Activated naive CD4-positive, alpha-beta T cell treated with anti-CD3 and anti-CD28 coated beads, Interleukin-2, amount 10 ng/mL, durations not matched to agents 7 days and 5 days (primary cell): ENCODE measurements at regions of chr11 and their contacts with region 1.

Region 1: DNA sequence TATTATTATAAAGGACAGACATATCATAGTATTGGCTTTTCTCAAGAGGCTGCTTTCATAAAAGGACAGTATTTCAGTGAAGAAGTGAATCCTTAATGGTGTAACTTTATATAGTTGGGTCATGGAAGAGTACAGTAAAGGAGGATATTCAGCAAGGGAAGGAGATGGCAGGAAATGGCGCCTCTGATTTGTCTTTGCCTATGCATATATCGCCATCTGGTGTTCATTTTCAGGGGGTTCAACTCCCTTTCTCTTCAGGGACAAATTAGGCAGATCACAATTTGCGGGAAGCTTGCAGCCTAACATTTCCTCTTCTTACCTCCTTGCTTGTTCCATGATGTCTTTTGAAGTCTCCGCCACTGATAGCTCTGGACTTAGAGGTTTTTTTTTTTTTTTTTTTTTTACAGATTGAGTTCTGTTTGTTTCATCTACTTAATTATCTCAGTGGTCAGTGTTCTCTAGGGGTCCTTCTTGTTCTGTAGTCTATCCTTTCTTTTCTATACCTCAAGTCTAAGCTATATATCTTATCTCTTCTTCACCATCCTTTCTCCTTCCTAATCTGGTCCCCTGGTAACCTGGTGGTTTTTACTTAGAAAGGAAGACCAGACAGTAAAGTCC is 21.8 kb upstream of the RRM1 start:
- DNase-seq: peak; percentile 60
- H3K4me3 Mint-ChIP-seq: no peak overlapping the region
- H3K27ac Mint-ChIP-seq: peak overlapping the region; percentile 0
- H3K4me1 Mint-ChIP-seq: peaks cover 35% of the 10 kb centered on the region
- H3K27me3 Mint-ChIP-seq: no peaks in the 10 kb centered on the region

Region 2: DNA sequence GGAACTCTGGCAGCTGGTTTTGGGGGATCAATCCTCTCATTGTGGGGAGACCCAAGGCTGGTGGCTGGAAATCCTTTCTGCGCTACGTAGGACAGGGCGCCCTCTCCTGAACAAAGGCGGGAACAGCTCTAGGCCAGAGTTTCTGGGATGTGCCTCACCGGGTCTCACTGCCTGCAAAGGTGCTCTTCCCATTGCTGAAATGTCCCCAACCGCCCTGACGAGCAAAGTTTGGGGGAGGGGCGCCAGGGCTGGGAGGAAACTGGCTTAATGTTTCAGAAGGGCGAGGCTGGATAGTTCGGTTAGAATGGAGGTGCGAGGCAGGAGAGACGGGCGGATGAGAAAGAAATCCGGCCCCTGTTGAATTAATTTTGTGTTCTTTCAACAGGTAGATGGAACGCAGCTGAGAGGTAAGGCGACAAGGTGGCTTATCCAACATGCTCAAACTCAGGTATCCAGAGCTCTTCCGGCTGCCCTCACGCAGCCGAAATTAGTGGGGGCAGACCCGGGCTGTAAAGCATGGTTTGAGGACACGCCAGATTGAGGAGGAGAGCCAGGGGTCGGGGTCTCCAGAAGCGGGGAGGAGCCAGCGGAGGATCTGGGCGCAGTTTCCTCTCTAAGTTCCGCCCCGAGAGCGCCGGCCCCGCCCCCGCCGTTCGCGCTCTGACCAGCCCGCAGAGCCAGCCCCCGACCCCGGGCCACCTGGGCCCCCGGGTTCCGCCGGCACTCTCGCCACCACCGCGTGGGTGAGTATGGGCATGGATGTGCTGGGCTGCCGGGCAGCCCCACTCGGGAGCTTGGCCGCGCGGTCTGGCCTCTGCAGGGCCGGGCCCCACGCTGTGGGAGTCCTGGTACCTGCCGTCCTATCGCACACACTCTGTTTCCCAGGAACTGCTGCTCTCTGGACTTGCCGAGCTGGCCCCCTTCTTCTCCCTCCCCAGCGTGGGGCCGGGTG is 264.6 kb before region 1 on chr11 and contains the start of gene PGAP2:
- CTCF ChIA-PET with region 1: interaction called, 27 read pairs
- DNase-seq: peak; percentile 81
- H3K4me3 Mint-ChIP-seq: peak within 1 kb of the TSS; percentile 93
- H3K27ac Mint-ChIP-seq: peak within 1 kb of the TSS; percentile 91
- H3K4me1 Mint-ChIP-seq: peaks cover 26% of the 10 kb centered on the region
- H3K27me3 Mint-ChIP-seq: no peaks in the 10 kb centered on the region

Region 3: GRCh38 chr11:3841426-3842350 is 231.1 kb before region 1 on chr11:
- CTCF ChIA-PET with region 1: interaction called, 195 read pairs
- DNase-seq: peak; percentile 95
- H3K4me3 Mint-ChIP-seq: peak overlapping the region; percentile 82
- H3K27ac Mint-ChIP-seq: peak overlapping the region; percentile 99
- H3K4me1 Mint-ChIP-seq: peaks cover 56% of the 10 kb centered on the region
- H3K27me3 Mint-ChIP-seq: no peaks in the 10 kb centered on the region

Region 4: DNA sequence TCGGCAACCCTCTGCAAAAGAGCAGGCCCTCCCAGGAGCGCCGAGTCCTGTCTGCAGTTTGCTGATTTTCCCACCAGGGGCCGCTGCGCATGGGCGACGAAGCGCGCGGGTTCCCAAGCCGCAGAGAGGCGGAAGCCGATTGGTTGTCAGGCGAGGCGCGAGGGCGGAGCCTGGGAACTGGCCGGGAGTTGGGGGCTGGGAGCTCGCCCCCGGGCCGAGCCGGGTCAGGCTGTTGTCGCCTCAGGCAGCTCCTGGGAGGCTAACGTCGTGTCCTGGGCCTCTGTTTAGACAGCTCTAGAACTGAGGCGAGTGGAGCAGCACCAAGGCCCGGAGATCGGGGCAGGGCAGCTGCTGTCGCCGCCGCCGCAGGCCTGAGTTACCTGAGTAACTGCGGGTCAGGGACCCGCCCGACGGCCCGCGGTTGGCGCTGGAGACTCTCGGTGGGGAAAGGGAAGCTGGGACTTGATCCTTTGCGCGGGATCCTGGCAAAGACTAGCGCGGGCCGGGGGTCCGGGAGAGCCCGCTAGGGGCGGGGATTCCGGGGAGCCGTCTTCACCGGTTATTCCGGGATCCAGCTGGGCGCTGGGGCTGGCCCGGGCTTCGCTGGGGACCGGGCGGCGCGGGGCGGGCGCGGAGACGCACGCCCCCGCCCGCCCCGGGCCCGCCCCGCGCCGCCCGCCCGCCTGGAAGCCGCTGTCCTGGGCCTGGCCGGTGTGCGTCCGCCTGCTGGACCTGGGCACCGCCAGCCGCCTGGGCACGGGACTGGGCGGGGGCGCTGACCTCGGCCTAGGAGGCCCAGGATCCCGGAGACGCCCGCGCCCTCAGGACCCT is 217.6 kb before region 1 on chr11 and contains the start of gene STIM1:
- CTCF ChIA-PET with region 1: interaction called, 195 read pairs
- DNase-seq: peak; percentile 97
- H3K4me3 Mint-ChIP-seq: peak within 1 kb of the TSS; percentile 98
- H3K27ac Mint-ChIP-seq: peak within 1 kb of the TSS; percentile 98
- H3K4me1 Mint-ChIP-seq: peaks cover 60% of the 10 kb centered on the region
- H3K27me3 Mint-ChIP-seq: peaks cover 6% of the 10 kb centered on the region

Region 5: DNA sequence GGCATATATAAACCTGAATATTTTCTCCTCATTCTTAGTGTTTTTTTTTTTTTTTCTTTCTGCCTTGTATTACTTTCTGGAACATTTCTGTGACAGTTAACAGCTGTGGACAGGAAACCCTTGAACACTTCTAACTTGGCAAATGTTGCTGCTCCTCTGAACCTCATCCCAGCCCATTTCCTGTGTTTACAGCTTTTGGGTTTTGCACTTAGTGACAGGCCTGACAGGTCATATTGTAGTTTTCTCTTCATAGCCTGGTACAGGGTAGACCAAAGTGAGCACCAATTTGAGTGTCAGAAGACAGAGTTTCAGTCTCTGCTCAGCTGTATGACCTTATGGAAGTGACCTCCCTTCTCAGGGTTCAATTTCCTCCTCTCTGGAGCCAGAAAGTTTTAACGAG is 125.7 kb before region 1 on chr11:
- CTCF ChIA-PET with region 1: interaction called, 34 read pairs
- DNase-seq: peak; percentile 72
- H3K4me3 Mint-ChIP-seq: peak overlapping the region; percentile 72
- H3K27ac Mint-ChIP-seq: peak overlapping the region; percentile 98
- H3K4me1 Mint-ChIP-seq: peaks cover 95% of the 10 kb centered on the region
- H3K27me3 Mint-ChIP-seq: no peaks in the 10 kb centered on the region

Region 6: DNA sequence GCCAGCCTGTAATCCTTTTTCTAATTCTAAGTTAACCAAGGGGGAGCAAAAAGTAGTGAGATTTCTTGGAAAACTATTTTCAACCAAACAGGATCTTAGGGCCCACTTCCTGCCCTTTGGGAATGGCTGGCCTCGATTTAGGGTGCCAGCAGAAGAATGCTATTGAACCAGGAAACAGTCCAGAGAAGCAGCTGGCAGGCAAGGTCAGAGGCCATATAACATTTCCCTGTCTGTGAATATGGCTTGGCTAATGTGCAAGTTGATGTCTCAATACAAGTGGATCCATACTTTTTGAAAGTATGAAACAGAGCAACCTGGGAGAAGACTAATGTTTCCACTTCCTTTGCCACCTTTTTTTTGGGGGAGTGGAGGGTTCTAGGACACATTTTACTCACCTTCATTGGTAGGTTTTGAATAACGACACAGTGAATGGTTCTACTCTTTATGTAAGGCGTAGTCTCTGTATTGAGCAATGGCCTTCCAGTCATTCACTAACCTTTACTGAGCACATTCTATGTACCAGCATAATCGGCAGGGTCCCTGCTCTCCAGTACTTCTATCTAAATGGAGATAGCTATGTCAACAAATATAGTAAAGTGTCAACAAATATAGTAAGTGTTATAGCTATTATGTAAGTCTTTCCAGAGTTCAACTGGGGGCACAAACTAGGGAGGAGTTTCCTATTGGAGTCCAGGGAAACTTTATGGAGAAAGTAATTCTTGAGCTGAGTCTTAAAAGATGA is 12.4 kb before region 1 on chr11:
- CTCF ChIA-PET with region 1: interaction called, 27 read pairs
- DNase-seq: no peak
- H3K4me3 Mint-ChIP-seq: no peak overlapping the region
- H3K27ac Mint-ChIP-seq: no peak overlapping the region
- H3K4me1 Mint-ChIP-seq: peaks cover 27% of the 10 kb centered on the region
- H3K27me3 Mint-ChIP-seq: no peaks in the 10 kb centered on the region

Region 7: DNA sequence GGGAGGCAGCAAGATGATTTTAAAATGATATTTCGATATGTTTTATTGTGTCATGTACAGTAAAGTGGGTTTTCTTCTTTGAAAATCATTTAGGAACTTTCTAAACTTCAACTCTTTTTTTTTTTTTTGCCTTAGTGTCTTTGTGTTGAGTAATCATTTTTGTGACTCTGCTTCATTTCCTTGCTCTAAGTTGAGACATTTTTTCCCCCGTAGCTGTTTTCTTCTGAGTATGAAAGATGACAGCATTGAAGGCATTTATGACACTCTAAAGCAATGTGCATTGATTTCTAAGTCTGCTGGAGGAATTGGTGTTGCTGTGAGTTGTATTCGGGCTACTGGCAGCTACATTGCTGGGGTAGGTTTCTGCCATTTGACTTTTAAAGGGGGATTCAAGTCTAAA is 45.3 kb after region 1 on chr11:
- CTCF ChIA-PET with region 1: no interaction called
- DNase-seq: no peak
- H3K4me3 Mint-ChIP-seq: no peak overlapping the region
- H3K27ac Mint-ChIP-seq: no peak overlapping the region
- H3K4me1 Mint-ChIP-seq: peaks cover 2% of the 10 kb centered on the region
- H3K27me3 Mint-ChIP-seq: no peaks in the 10 kb centered on the region